ENCODE measurements at regions of chr3 and their contacts with region 1.

Region 1: DNA sequence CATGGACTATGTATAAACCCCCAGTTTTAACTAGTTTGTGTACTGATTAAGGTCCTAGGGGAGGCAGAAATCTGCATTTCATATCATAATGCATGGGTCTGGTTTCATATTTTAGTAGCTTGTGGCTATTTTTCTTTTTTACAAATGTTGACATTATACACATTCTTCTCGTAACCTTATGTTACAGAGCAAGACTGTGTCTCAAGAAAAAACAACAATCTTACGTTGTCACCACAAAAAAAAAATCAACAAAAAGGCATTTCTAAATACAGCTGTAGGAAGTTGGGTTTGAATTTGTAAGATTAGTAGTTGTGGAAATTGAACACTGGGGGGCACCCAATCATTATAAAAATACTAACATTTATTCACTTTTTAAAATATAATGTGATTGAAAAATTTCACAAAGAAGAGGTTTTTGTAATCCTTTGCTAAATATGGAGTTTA is 17.9 kb downstream of the SERP1 start:
- DNase-seq: no peak
- ATAC-seq: no peak
- H3K4me3 Mint-ChIP-seq: no peak overlapping the region
- H3K27ac Mint-ChIP-seq: no peak overlapping the region
- H3K4me1 Mint-ChIP-seq: peaks cover 8% of the 10 kb centered on the region
- H3K27me3 Mint-ChIP-seq: peaks cover 2% of the 10 kb centered on the region

Region 2: GRCh38 chr3:150286390-150287147 is 241.8 kb before region 1 on chr3:
- CTCF ChIA-PET with region 1: no interaction called
- POLR2A ChIA-PET with region 1: no interaction called
- intact Hi-C with region 1: no loop called
- DNase-seq: peak; percentile 9
- ATAC-seq: peak; percentile 58
- H3K4me3 Mint-ChIP-seq: no peak overlapping the region
- H3K27ac Mint-ChIP-seq: no peak overlapping the region
- H3K4me1 Mint-ChIP-seq: no peaks in the 10 kb centered on the region
- H3K27me3 Mint-ChIP-seq: peaks cover 14% of the 10 kb centered on the region

Region 3: DNA sequence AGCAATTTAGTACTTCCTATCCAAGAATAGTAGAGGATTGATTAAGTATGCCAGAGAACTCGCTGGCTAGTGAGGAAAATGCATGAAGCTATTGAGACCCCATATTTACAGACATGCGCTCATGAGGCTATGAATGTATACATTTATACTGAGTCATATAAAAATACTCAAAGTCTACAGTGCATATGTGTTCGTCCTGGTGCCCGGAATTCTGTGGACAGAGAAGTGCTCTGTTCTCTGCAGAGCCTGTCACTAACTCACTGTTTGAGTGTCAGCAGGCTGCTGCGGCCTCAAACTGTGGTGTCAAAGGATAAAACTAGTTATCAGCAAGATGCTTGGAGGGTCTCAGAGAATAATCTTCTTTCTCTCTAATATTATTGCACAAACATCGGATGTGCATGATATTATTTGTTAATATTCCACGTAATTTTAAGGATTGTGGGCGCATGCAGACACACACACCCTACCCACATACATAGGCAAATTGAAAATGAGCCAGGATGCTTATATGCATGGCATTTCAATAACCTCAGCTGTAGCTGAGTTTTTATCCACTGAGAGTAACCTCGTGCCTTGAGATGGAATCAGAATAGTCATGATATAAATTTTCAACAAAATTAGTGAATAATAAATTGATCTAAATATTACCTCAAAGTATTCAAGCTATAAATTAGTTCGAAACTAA is 170.3 kb before region 1 on chr3:
- CTCF ChIA-PET with region 1: no interaction called
- POLR2A ChIA-PET with region 1: interaction called, 11 read pairs
- intact Hi-C with region 1: no loop called
- DNase-seq: no peak
- ATAC-seq: no peak
- H3K4me3 Mint-ChIP-seq: no peak overlapping the region
- H3K27ac Mint-ChIP-seq: no peak overlapping the region
- H3K4me1 Mint-ChIP-seq: no peaks in the 10 kb centered on the region
- H3K27me3 Mint-ChIP-seq: no peaks in the 10 kb centered on the region

Region 4: GRCh38 chr3:150384296-150385212 is 143.8 kb before region 1 on chr3:
- CTCF ChIA-PET with region 1: no interaction called
- POLR2A ChIA-PET with region 1: no interaction called
- intact Hi-C with region 1: no loop called
- DNase-seq: peak; percentile 72
- ATAC-seq: peak; percentile 96
- H3K4me3 Mint-ChIP-seq: peak overlapping the region; percentile 46
- H3K27ac Mint-ChIP-seq: peak overlapping the region; percentile 91
- H3K4me1 Mint-ChIP-seq: peaks cover 28% of the 10 kb centered on the region
- H3K27me3 Mint-ChIP-seq: no peaks in the 10 kb centered on the region

Region 5: DNA sequence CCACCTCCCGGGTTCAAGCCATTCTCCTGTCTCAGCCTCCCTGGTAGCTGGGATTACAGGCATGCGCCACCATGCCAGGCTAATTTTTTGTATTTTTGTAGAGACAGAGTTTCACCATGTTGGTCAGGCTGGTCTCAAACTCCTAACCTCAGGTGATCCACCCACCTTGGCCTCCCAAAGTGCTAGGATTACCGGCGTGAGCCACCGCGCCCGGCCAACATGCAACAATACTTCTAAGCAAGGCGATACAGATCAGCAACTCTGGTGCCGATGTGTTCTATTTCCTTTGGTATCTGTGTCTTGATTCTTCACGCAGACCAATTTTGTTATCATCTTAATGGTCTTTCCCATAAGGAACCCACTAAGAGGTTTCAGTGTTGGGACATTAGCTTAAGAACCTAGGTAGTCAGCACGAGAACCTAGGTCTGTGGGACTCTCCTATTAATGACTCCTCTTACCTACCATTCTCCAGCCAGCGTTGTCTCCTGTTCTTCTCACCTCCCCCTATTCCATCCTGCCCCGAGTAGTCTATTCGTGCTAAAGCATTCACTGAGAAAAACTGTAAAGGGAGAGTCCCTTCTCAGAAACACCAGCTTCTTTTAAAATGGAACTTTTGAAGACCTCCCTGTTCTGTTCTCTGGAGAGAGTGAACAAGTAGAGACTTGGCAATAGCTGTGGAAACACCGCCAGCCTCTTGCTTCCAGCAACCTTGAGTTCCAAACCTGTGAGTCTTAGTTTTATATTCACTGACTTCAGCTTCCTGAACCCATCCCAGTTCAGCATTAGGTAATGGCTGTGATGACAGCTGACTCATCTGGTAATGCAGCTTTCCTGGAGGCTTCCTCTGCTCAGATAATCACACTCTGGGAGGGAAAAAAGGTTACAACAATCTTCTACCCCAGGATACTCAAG is 59.1 kb before region 1 on chr3:
- CTCF ChIA-PET with region 1: no interaction called
- POLR2A ChIA-PET with region 1: no interaction called
- intact Hi-C with region 1: no loop called
- DNase-seq: no peak
- ATAC-seq: no peak
- H3K4me3 Mint-ChIP-seq: no peak overlapping the region
- H3K27ac Mint-ChIP-seq: no peak overlapping the region
- H3K4me1 Mint-ChIP-seq: no peaks in the 10 kb centered on the region
- H3K27me3 Mint-ChIP-seq: no peaks in the 10 kb centered on the region

Region 6: GRCh38 chr3:150870396-150870795 is 342.0 kb after region 1 on chr3:
- CTCF ChIA-PET with region 1: no interaction called
- POLR2A ChIA-PET with region 1: no interaction called
- intact Hi-C with region 1: loop called (anchors 1 to 2 kb)
- DNase-seq: no peak
- ATAC-seq: no peak
- H3K4me3 Mint-ChIP-seq: no peak overlapping the region
- H3K27ac Mint-ChIP-seq: no peak overlapping the region
- H3K4me1 Mint-ChIP-seq: peaks cover 2% of the 10 kb centered on the region
- H3K27me3 Mint-ChIP-seq: peaks cover 15% of the 10 kb centered on the region

Region 7: GRCh38 chr3:151146071-151146730 is 617.8 kb after region 1 on chr3:
- CTCF ChIA-PET with region 1: interaction called, 3 read pairs
- POLR2A ChIA-PET with region 1: no interaction called
- intact Hi-C with region 1: loop called (anchors 1 to 2 kb)
- DNase-seq: peak; percentile 74
- ATAC-seq: peak; percentile 97
- H3K4me3 Mint-ChIP-seq: no peak overlapping the region
- H3K27ac Mint-ChIP-seq: no peak overlapping the region
- H3K4me1 Mint-ChIP-seq: no peaks in the 10 kb centered on the region
- H3K27me3 Mint-ChIP-seq: peaks cover 3% of the 10 kb centered on the region

Measured in activated CD4-positive, alpha-beta T cell treated with anti-CD3 and anti-CD28 coated beads for 36 hours (primary cell).